GM12878 (cell line): ENCODE measurements at regions of chr7 and their contacts with region 1.

Region 1: GRCh38 chr7:137753954-137754851 is 92.6 kb downstream of the DGKI start:
- DNase-seq: peak; percentile 27
- ATAC-seq: peak; percentile 72
- H3K4me3 ChIP-seq: no peak overlapping the region
- H3K27ac ChIP-seq: no peak overlapping the region
- H3K4me1 ChIP-seq: no peaks in the 10 kb centered on the region; the same call in 1 of the 2 replicates
- H3K27me3 ChIP-seq: no peaks in the 10 kb centered on the region; a peak in 1 of 4 replicates
- CTCF ChIP-seq: no peak
- EP300 ChIP-seq: peak; percentile 76 to 92; a peak in 2 of 4 replicates
- POLR2A ChIP-seq: no peak
- RAD21 ChIP-seq: no peak; the same call in 1 of the 2 replicates

Region 2: DNA sequence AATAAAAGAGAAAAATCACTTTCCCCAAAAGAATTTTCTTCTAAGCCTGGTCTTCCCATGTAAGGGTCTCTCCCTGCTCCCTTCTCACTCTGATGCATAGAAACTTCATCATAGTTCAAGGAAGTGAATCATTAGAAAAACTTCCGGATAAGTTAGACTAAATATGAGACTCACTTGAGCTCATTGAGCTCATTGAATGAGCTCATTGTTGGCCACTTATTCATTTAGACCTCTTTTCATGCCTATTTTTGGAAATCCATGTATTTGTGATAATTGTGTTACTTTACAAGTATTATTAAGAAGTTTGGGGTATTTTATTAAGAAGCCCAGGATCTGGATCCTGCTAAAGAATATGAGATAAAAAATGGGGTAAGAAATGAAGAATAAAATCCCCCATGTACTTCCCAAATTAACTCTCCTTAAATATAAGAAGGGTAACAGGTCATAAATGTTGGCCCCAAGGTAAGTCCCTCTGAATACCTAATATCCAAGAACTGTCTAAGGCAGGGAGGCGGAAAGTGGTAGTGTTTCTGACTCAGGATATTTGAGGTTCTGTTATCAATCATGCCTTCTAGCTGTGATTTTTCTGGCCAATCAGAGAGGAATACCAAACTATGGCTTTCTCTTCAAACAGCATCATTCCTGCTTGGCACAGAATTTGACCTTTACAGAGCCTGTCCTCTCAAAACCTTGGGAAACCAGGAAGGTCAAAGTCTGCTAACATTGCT is 174.1 kb before region 1 on chr7:
- CTCF ChIA-PET with region 1: no interaction called
- POLR2A ChIA-PET with region 1: no interaction called
- RAD21 ChIA-PET with region 1: no interaction called
- SMC1A ChIA-PET with region 1: no interaction called
- in situ Hi-C with region 1: no loop called
- intact Hi-C with region 1: no loop called
- DNase-seq: no peak
- ATAC-seq: peak; percentile 72
- H3K4me3 ChIP-seq: no peak overlapping the region
- H3K27ac ChIP-seq: no peak overlapping the region
- H3K4me1 ChIP-seq: no peaks in the 10 kb centered on the region
- H3K27me3 ChIP-seq: no peaks in the 10 kb centered on the region
- CTCF ChIP-seq: no peak
- EP300 ChIP-seq: no peak
- POLR2A ChIP-seq: no peak
- RAD21 ChIP-seq: no peak

Region 3: DNA sequence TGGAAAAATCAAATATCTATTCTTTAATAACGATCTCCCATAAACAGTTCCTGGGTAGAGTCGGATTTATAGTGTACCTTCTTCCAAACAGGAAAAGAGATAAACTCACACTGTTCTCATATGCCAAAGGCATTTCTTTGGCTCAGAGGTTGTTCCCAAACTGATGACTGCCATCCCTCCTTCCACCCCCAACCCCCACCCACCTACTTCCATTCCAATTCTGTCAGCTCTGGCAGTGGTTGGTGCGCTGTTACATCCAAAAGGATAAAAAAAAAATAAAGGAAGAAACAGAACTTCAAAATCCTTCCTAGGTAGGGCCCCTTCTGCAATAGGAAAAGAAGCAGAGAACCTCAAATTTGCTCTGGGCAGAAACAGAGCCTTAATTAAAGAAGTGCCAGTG is 12.2 kb before region 1 on chr7:
- CTCF ChIA-PET with region 1: interaction called, 6 read pairs
- POLR2A ChIA-PET with region 1: interaction called, 6 read pairs
- RAD21 ChIA-PET with region 1: interaction called, 6 read pairs
- SMC1A ChIA-PET with region 1: interaction called, 13 read pairs
- in situ Hi-C with region 1: no loop called
- intact Hi-C with region 1: no loop called
- DNase-seq: no peak
- ATAC-seq: no peak
- H3K4me3 ChIP-seq: no peak overlapping the region
- H3K27ac ChIP-seq: no peak overlapping the region
- H3K4me1 ChIP-seq: no peaks in the 10 kb centered on the region
- H3K27me3 ChIP-seq: no peaks in the 10 kb centered on the region
- CTCF ChIP-seq: no peak
- EP300 ChIP-seq: no peak
- POLR2A ChIP-seq: no peak
- RAD21 ChIP-seq: no peak

Region 4: DNA sequence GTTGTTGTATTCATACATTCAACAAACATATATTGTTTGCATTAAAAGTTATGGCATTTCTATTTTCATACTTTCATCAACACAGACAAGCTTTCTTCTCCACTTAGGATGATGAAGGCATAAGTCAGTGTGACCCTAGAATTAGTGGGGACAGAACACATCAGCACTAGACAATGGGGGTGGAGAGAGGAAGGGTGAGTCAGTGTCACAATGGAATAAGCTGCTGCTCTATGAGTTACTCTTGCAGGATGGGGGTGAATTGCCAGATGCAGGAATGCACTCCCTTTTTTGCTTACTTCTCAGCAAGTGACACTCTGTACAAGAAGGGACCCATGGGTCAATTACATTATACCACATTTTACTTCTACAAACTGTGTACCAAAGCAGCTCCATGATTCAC is 18.5 kb after region 1 on chr7:
- CTCF ChIA-PET with region 1: interaction called, 13 read pairs
- POLR2A ChIA-PET with region 1: interaction called, 34 read pairs
- RAD21 ChIA-PET with region 1: interaction called, 72 read pairs
- SMC1A ChIA-PET with region 1: interaction called, 94 read pairs
- in situ Hi-C with region 1: no loop called
- intact Hi-C with region 1: no loop called
- DNase-seq: no peak
- ATAC-seq: peak; percentile 64
- H3K4me3 ChIP-seq: no peak overlapping the region
- H3K27ac ChIP-seq: no peak overlapping the region
- H3K4me1 ChIP-seq: no peaks in the 10 kb centered on the region
- H3K27me3 ChIP-seq: no peaks in the 10 kb centered on the region
- CTCF ChIP-seq: no peak
- EP300 ChIP-seq: no peak
- POLR2A ChIP-seq: no peak
- RAD21 ChIP-seq: no peak

Region 5: DNA sequence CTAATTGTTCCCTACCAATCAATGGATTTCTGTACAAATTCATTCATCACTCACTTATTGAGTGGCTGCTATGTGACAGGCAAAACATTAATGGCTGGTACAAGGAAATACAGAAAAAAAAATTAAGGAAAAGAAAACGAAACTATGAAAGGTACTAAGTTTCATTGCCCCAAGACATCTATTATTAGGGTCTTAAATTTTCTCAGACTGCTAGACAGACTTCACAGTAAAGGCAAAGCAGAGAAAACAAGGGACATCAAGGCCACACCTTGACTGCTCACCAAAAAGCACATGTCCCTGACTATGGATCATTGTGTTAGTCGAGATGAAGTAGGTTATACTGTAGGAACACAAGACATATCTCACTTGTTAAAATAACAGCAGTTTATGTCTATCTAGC is 56.0 kb after region 1 on chr7:
- CTCF ChIA-PET with region 1: interaction called, 4 read pairs
- POLR2A ChIA-PET with region 1: interaction called, 4 read pairs
- RAD21 ChIA-PET with region 1: interaction called, 3 read pairs
- SMC1A ChIA-PET with region 1: interaction called, 31 read pairs
- in situ Hi-C with region 1: no loop called
- intact Hi-C with region 1: no loop called
- DNase-seq: no peak
- ATAC-seq: peak; percentile 31
- H3K4me3 ChIP-seq: no peak overlapping the region
- H3K27ac ChIP-seq: no peak overlapping the region
- H3K4me1 ChIP-seq: peaks cover 3% of the 10 kb centered on the region; the same call in 1 of the 2 replicates
- H3K27me3 ChIP-seq: no peaks in the 10 kb centered on the region
- CTCF ChIP-seq: no peak
- EP300 ChIP-seq: no peak
- POLR2A ChIP-seq: no peak
- RAD21 ChIP-seq: no peak

Region 6: DNA sequence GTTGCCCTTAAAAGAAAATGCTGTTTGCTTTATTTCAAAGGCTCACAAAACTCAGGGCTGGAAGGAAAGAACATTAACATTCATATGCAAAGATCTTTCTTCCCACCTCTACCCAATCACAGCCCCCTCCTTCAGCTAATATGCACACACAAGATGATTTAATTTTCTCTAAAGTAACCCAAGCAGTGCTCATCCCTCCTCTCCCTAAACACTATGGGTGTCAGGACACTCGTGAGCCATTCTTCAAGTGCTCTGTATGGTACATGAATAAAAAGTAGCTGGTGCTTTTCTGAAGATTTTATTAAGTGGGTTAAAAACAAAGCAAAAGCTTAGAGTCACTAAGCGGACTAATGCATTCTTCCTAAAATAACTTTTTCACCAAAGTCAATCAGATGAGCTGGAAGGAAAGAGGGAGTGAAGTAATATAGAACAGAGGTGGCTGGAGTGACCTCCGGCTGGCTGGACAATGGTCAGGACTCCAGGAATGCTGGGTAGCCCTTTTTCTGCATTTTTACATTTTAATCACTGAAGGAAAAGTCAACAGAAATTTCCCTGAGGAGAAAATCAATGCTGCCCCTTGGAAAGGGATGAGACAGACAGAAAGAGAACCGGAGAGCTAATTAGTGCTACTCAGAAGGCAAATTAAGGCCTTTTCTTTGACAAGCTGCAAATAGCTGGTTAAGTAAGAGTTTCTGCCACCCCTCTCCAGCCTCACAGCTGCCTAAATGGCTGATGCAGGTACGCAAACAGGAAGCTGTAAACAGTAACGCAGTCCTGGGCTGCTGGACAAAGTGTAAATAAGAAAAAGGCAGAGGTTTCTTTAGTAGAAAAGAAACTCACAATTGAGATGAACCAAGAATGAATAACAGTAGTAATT is 85.9 kb after region 1 on chr7:
- CTCF ChIA-PET with region 1: interaction called, 4 read pairs
- POLR2A ChIA-PET with region 1: no interaction called
- RAD21 ChIA-PET with region 1: interaction called, 8 read pairs
- SMC1A ChIA-PET with region 1: interaction called, 28 read pairs
- in situ Hi-C with region 1: no loop called
- intact Hi-C with region 1: no loop called
- DNase-seq: no peak
- ATAC-seq: 0 out of 3 replicates have a peak, but pooled peaks have one; percentile 11
- H3K4me3 ChIP-seq: no peak overlapping the region
- H3K27ac ChIP-seq: no peak overlapping the region
- H3K4me1 ChIP-seq: no peaks in the 10 kb centered on the region
- H3K27me3 ChIP-seq: peaks cover 0 to 2% of the 10 kb centered on the region in 2 experiments; a peak in 2 of 4 replicates
- CTCF ChIP-seq: no peak
- EP300 ChIP-seq: no peak
- POLR2A ChIP-seq: no peak
- RAD21 ChIP-seq: no peak